Activated T-helper 2 cell treated with anti-CD3 and anti-CD28 coated beads, Interferon-gamma antibody, Interleukin-2, Interleukin-4, amounts not matched to agents 10 μg/mL and 5 μg/mL and 100 μg/mL, durations not matched to agents 14 hours and 24 hours and 36 hours (primary cell): ENCODE measurements at regions of chr6 and their contacts with region 1.

Region 1: DNA sequence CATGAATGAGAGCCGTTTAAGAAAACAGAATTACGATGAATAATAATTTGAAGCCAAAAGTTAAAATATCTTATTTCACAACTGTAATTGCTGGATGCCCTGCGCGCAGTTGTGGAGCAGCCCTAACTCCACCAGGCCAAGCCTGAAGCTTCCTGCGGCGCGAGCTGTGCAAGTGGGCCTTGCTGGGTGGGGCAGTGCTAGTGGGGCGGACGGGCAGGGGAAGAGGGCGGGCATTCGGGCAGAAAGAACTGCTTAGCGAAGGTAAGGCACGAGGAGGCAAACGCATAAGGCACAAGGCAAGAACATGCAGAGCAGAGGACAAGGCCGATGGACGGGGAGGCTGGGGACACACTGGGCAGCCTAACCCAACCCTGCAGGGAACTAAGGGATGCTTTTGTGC is 2.3 kb downstream of the HLA-DQB2 start:
- DNase-seq: no peak
- H3K4me3 Mint-ChIP-seq: no peak overlapping the region
- H3K27ac Mint-ChIP-seq: no peak overlapping the region
- H3K4me1 Mint-ChIP-seq: no peaks in the 10 kb centered on the region
- H3K27me3 Mint-ChIP-seq: peaks cover 37% of the 10 kb centered on the region

Region 2: GRCh38 chr6:31862344-31863227 is 898.5 kb before region 1 on chr6 and contains the start of gene NEU1:
- intact Hi-C with region 1: no loop called
- DNase-seq: peak; percentile 100
- H3K4me3 Mint-ChIP-seq: peak within 1 kb of the TSS; percentile 97
- H3K27ac Mint-ChIP-seq: peak within 1 kb of the TSS; percentile 93
- H3K4me1 Mint-ChIP-seq: peaks cover 13% of the 10 kb centered on the region
- H3K27me3 Mint-ChIP-seq: no peaks in the 10 kb centered on the region
- total RNA-seq, gene NEU1: 21.3 and 21.6 TPM in 2 replicates

Region 3: GRCh38 chr6:32666420-32667300 is 94.4 kb before region 1 on chr6 and contains the start of gene HLA-DQB1:
- intact Hi-C with region 1: loop called (anchors 2 kb)
- DNase-seq: peak; percentile 46
- H3K4me3 Mint-ChIP-seq: peak within 1 kb of the TSS; percentile 81
- H3K27ac Mint-ChIP-seq: peak within 1 kb of the TSS; percentile 74
- H3K4me1 Mint-ChIP-seq: peaks cover 46% of the 10 kb centered on the region
- H3K27me3 Mint-ChIP-seq: peaks cover 35% of the 10 kb centered on the region
- total RNA-seq, gene HLA-DQB1: 1.6 and 2.7 TPM in 2 replicates

Region 4: GRCh38 chr6:33118525-33119123 is 357.6 kb after region 1 on chr6:
- intact Hi-C with region 1: no loop called
- DNase-seq: no peak
- H3K4me3 Mint-ChIP-seq: no peak overlapping the region
- H3K27ac Mint-ChIP-seq: no peak overlapping the region
- H3K4me1 Mint-ChIP-seq: peaks cover 6% of the 10 kb centered on the region
- H3K27me3 Mint-ChIP-seq: peaks cover 61% of the 10 kb centered on the region